HAP-1 (cell line): ENCODE measurements at regions of chr16 and their contacts with region 1.

Region 1: DNA sequence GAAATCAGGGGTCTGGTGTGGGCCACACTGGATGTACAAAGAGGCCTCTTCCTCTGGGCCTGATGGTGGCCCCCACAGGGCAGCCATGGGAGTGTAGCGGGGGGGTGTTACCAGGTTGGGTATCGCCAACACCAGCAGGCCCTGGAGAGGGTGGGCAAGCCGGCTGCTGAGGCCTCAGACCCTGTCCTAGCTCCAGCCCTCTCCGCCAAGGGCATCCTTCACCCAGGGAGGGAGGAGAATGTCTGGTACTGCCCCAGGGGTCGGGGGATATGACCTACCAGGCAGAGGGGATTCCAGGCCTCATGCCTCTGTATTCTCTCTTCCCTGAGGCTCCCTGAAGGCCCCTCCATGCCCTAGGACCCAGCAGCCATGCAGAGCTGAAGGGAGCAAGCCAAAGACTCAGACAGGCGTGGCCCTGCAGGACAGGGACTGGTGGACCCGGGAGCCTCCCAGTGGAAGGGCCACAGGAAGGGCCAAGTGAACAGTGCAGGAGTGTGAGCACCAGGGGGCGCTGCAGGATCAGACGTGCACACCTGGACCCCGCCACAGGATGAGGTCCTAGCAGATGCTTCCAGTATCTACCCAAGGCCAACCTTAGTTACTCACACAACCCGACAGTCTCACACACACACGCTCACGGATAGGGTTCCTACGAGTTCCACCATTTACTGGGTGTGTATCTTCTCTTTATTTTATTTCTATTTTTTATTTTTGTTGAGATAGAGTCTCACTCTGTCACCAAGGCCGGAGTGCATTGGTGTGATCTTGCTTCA is 10.9 kb upstream of the CES4A start:
- DNase-seq: peak; percentile 78 to 95
- H3K4me3 ChIP-seq: no peak overlapping the region
- H3K4me1 ChIP-seq: peaks cover 8% of the 10 kb centered on the region
- H3K27me3 ChIP-seq: no peaks in the 10 kb centered on the region

Region 2: GRCh38 chr16:67159593-67160406 is 182.3 kb after region 1 on chr16 and contains the starts of genes FBXL8 and TRADD:
- in situ Hi-C with region 1: loop called (anchors 10 kb)
- DNase-seq: peak; percentile 55 to 79
- H3K4me3 ChIP-seq: peak within 1 kb of the TSS; percentile 67
- H3K4me1 ChIP-seq: no peaks in the 10 kb centered on the region; the same call in 1 of the 2 replicates
- H3K27me3 ChIP-seq: no peaks in the 10 kb centered on the region

Region 3: DNA sequence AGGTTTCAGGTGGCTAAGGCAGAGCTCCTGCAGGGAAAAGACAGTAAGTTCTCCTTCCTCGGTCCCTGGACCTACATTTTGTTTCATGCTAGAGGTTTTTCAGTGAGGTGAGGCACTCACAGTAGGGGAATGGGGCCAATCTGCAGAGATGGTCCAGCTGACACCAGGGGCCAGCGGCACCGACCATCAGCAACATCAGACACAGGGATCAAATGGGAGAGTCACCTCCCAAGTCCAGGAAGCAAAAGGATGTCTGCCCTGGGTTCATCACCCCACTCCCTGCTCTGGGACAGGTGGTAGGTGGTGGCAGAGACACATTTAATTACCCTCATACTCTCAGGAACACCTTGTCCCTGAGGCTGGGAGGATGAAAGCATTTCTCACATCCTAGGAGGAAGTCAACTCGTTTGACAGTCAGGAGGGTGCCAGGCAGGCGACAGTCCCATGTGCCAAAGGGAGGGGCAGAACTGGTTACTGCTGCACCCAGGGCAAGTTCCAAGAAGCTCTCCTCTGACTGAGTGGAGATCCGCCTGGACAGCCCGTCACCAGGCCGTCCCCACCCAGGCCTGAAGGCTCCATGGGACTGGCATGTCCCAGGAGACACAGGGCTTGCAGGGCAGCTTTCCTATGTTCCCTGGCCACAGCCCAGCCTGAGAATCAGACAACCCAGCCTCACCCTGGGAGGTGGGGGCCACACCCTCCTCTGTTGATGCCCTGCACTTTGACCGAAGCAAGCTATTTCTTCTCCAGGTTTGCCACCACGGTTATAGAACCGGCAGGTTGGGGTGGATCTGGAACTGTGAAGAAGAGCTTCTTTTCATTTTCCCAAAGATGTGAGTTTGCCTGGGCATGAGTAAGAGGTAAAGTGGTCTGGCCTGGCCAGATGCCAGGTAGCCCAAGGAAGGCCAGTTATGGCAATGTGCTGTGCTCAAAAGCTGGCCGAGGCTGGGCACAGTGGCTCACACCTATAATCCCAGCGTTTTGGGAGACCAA is 484.4 kb after region 1 on chr16:
- in situ Hi-C with region 1: loop called (anchors 10 kb)
- DNase-seq: no peak
- H3K4me3 ChIP-seq: no peak overlapping the region
- H3K4me1 ChIP-seq: peaks cover 4% of the 10 kb centered on the region; the same call in 1 of the 2 replicates
- H3K27me3 ChIP-seq: no peaks in the 10 kb centered on the region